Heart left ventricle (tissue), 16 donors: ENCODE measurements at regions of chr3 and their contacts with region 1.

Region 1: GRCh38 chr3:141412087-141412935 is 44.0 kb downstream of the ZBTB38 start:
- DNase-seq: peak in 4 of 5 donors; percentile 62 to 68 (median 67)
- ATAC-seq: peak; percentile 32 to 70 (median 64)
- H3K4me3 ChIP-seq: peak overlapping the region in 10 of 12 donors; percentile 12 to 53 (median 34)
- H3K27ac ChIP-seq: peak overlapping the region; percentile 93 to 99 (median 98)
- H3K4me1 ChIP-seq: peaks cover 13 to 99% (median 90%) of the 10 kb centered on the region in 12 donors
- H3K27me3 ChIP-seq: no peaks in the 10 kb centered on the region
- CTCF ChIP-seq: no peak
- POLR2A ChIP-seq: no peak

Region 2: DNA sequence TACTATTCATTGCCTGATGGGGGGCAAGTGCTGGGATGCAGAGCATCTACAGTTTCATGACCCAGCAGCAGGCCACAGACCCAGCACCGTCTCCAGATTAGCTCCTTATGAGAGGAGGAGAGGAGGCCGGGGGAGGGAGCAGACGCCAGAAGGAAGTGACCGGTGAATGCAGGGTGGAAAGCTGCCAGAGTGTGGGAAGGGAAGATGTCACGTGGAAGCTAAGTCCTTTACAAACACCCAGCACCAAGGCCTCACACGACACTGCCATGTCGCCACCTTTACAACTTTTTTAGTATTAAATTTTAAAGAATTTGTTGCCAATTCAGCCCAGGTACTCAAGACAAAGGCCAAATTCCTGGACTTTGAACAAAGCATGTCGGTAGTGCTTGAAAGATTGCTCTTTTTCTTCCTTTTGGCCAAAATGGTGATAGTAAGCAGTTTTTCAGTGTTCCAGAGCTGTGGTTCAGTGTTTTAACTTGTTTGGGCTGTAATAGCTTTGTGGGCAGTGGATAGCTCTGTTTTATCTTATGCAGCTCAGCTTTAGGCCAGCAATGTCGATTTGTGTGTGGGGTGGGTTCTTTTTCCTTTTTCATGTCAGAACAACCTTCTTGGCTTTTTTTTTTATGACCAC is 14.2 kb after region 1 on chr3:
- intact Hi-C with region 1: loop called in 2 of 10 experiments (anchors 2 kb)
- DNase-seq: peak; percentile 85 to 93 (median 91)
- ATAC-seq: peak; percentile 44 to 80 (median 72)
- H3K4me3 ChIP-seq: no peak overlapping the region
- H3K27ac ChIP-seq: peak overlapping the region in 11 of 12 donors; percentile 62 to 87 (median 80)
- H3K4me1 ChIP-seq: peaks cover 9 to 98% (median 69%) of the 10 kb centered on the region in 12 donors
- H3K27me3 ChIP-seq: no peaks in the 10 kb centered on the region
- CTCF ChIP-seq: no peak
- POLR2A ChIP-seq: peak in 1 of 2 donors; percentile 19

Region 3: DNA sequence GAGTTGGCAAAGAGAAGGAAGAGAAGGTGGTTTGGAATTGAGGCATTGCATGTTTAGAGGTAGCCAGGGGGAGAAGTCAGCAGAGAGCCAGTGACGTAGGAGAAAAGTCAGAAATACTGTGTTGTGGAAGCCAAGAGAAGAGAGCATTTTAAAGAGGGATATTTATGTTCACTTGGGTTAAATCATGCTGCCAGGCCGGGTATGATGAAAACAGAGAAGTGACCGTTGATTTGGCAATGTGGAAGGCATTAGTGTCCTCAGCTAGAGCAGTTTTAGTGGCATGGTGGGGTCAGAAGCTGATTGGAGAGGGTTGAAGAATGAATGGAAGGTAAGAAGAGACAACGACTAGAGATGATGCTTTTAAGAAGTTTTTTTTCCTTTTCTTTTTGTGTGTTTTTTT is 99.0 kb after region 1 on chr3:
- intact Hi-C with region 1: no loop called
- DNase-seq: no peak
- ATAC-seq: no peak
- H3K4me3 ChIP-seq: no peak overlapping the region
- H3K27ac ChIP-seq: no peak overlapping the region
- H3K4me1 ChIP-seq: peaks cover 0 to 25% (median 0%) of the 10 kb centered on the region in 12 donors
- H3K27me3 ChIP-seq: no peaks in the 10 kb centered on the region
- CTCF ChIP-seq: no peak
- POLR2A ChIP-seq: no peak